ENCODE measurements at regions of chr7 and their contacts with region 1.

Region 1: GRCh38 chr7:44606450-44607254 is at the start of gene OGDH:
- DNase-seq: peak; percentile 100
- ATAC-seq: peak; percentile 98
- H3K4me3 Mint-ChIP-seq: peak within 1 kb of the TSS; percentile 92
- H3K27ac Mint-ChIP-seq: peak within 1 kb of the TSS; percentile 97
- H3K4me1 Mint-ChIP-seq: peaks cover 33% of the 10 kb centered on the region
- H3K27me3 Mint-ChIP-seq: no peaks in the 10 kb centered on the region
- total RNA-seq, gene OGDH: 80.3 to 90.1 TPM

Region 2: DNA sequence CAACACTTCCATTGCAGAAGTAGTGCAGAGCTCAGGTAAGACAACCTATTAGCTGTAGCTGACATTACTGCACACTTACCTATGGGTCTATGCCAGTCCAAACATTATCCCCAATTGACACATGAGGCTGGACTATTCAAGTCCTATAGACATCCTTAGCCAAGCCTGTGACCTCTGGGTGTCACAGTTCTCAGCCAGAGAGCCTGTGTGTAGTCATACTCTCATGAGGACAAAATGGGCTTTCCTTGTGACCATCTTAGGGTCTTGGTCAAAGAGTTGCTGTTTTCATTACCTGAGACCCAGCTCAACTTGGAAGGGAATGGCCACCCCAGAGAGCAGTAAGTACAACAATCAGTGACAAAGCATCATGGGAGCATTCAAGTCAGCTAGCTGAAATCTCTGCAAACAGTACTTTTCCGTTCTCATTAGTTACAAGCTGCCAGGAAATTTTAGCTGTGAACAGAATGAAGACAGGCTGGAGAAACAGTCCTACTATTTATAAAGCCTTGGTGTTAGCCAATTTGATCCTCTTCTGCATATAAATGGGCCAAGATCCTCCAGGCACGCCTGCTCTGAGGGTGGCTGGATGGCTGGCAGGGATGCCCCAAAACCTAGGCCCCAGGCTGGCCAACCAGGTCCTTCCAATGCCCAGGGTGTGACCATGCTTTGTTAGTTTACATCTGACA is 160.5 kb before region 1 on chr7:
- CTCF ChIA-PET with region 1: no interaction called
- POLR2A ChIA-PET with region 1: no interaction called
- intact Hi-C with region 1: no loop called
- DNase-seq: no peak
- ATAC-seq: no peak
- H3K4me3 Mint-ChIP-seq: no peak overlapping the region
- H3K27ac Mint-ChIP-seq: no peak overlapping the region
- H3K4me1 Mint-ChIP-seq: peaks cover 41% of the 10 kb centered on the region
- H3K27me3 Mint-ChIP-seq: no peaks in the 10 kb centered on the region

Region 3: DNA sequence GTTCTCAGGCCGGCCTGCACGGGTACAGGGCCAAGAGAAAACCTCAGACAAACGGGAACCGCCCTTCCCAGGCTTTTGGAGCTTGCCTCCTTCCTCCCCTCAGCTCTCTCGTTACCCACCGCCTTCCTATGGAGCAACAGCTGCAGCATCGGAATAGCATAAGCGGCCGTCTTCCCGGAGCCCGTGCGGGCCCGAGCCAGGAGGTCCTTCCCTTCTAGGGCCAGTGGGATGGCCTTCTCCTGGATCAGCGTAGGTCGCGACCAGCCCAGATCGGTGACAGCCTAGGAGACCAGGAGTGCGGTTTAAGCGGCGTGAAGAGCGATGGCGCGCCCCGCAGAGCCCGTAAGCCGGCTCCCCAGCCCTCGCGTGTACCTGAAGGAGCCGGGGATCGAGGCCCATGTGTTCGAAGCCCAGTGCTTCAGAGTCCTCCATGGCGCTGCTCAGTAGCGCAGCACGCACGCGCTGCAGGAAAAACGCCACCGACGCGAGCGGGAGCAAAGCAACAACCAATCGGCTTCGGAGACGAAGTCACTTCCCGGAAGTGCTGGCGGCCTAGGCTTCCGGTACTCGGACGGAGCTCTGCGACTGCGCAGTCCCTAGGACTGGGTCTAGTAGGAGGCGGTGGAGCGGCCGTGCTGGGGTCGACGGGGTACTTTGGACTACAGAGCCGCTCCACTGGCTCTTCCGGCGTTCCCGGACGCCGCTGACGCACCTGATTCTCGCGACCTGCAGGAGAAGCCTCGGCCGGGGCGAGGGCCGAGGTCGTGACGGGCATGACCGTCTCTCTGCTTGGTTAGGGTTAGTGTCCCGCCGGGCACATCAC is 33.0 kb before region 1 on chr7 and contains the start of gene DDX56:
- CTCF ChIA-PET with region 1: interaction called, 3 read pairs
- POLR2A ChIA-PET with region 1: interaction called, 12 read pairs
- intact Hi-C with region 1: loop called in 1 of 2 experiments (anchors 2 kb)
- DNase-seq: peak; percentile 97
- ATAC-seq: peak; percentile 98
- H3K4me3 Mint-ChIP-seq: peak within 1 kb of the TSS; percentile 90
- H3K27ac Mint-ChIP-seq: peak within 1 kb of the TSS; percentile 94
- H3K4me1 Mint-ChIP-seq: peaks cover 41% of the 10 kb centered on the region
- H3K27me3 Mint-ChIP-seq: no peaks in the 10 kb centered on the region
- total RNA-seq, gene DDX56: 98.5 to 104 TPM

Region 4: GRCh38 chr7:44581879-44582603 is 24.6 kb before region 1 on chr7 and contains the start of gene TMED4:
- CTCF ChIA-PET with region 1: interaction called, 6 read pairs
- POLR2A ChIA-PET with region 1: interaction called, 6 read pairs
- intact Hi-C with region 1: loop called (anchors 1 kb)
- DNase-seq: peak; percentile 100
- ATAC-seq: peak; percentile 95
- H3K4me3 Mint-ChIP-seq: peak within 1 kb of the TSS; percentile 85
- H3K27ac Mint-ChIP-seq: peak within 1 kb of the TSS; percentile 92
- H3K4me1 Mint-ChIP-seq: peaks cover 33% of the 10 kb centered on the region
- H3K27me3 Mint-ChIP-seq: no peaks in the 10 kb centered on the region
- total RNA-seq, gene TMED4: 71.6 to 73.0 TPM

Region 5: DNA sequence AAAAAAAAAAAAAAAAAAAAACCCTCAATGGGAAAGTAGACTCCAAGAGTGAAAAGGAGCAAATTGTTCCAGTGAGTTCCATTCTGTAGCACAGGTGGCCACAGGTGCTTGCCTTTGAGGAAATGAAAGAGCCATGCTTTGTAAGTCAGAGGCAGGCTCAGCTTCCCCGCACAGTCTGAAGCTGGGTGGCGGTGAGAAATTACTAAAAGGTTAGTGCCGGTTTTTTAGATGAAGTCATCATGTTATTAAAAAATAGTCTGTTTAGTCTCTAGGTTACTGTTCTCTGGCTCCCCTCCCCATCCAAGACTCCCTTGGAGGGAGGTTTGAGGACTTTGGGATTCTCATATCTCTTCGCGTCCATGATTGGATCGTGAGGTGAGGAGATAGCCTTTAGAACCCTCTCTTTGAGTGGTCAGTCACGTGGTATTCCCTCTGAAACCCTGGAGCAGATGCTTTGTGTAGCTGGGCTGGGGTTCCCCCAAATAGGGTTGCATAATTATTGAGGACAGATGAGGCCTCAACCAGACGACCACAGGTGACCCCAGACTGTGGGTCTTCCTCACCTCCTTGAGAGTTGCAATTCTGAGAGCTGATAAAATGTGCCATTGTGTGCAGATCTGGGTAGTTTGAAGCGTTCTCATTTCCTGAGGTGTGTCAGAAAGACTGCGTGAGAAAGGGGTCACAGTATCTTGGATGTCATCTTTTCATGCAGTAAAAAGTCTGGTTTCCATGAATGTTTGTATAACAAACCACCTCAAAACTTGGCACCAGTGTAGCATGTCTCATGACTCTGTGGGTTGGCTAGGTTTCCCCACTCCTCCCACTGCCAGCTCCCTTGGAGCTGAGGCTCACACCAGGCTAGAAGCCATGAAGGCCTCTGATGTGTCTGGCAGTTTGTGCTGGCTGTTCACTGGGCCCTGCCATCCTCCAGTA is 26.9 kb after region 1 on chr7:
- CTCF ChIA-PET with region 1: interaction called, 7 read pairs
- POLR2A ChIA-PET with region 1: interaction called, 23 read pairs
- intact Hi-C with region 1: loop called (anchors 1 kb)
- DNase-seq: peak; percentile 72
- ATAC-seq: peak; percentile 57
- H3K4me3 Mint-ChIP-seq: peak overlapping the region; percentile 51
- H3K27ac Mint-ChIP-seq: peak overlapping the region; percentile 93
- H3K4me1 Mint-ChIP-seq: peaks cover 93% of the 10 kb centered on the region
- H3K27me3 Mint-ChIP-seq: no peaks in the 10 kb centered on the region

Region 6: GRCh38 chr7:44735403-44736165 is 128.9 kb after region 1 on chr7:
- CTCF ChIA-PET with region 1: interaction called, 3 read pairs
- POLR2A ChIA-PET with region 1: interaction called, 11 read pairs
- intact Hi-C with region 1: no loop called
- DNase-seq: peak; percentile 69
- ATAC-seq: peak; percentile 93
- H3K4me3 Mint-ChIP-seq: peak overlapping the region; percentile 6
- H3K27ac Mint-ChIP-seq: peak overlapping the region; percentile 81
- H3K4me1 Mint-ChIP-seq: peaks cover 24% of the 10 kb centered on the region
- H3K27me3 Mint-ChIP-seq: no peaks in the 10 kb centered on the region

Region 7: DNA sequence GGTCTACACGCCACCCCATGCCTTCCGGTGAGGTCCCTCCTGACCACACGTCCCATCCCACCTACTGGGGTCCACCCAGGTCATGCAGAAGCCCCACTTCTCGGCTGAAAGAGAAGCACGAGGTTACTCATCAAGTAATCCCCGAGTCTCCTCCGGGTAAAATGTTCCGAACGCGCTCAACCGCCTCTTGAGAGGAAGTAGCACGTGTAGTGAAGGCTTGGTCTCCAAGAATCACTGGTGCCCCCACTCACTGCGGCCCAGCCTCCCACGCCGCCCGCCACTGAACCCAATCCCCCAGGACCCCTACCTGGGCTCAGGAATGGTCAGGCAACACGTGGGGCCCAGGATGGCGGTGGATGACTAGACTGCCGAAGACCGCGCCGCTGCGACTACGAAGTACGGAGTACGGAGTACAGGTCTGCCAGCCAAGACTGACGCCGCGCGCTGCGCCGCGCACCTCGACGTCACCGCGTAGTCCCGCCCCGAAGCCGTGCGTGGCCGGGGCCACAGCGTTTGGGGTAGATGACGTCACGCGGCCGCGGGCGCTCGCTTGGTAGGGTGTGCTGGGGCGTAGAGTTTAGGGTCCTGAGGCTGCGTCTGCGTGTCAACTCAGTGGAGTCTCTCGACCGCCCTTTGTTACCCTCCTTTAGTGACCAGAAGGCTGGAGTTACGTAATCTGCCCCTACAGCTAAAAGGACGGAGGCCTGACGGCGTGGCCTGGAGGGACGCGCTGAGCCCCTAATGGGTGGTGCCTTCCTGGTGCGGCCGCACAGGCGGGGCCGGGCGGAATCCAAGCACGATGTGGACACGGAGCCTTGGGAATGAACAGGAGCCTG is 379.8 kb after region 1 on chr7:
- CTCF ChIA-PET with region 1: no interaction called
- POLR2A ChIA-PET with region 1: no interaction called
- intact Hi-C with region 1: loop called in 1 of 2 experiments (anchors 1 kb)
- DNase-seq: peak; percentile 99
- ATAC-seq: peak; percentile 90
- H3K4me3 Mint-ChIP-seq: peak overlapping the region; percentile 99
- H3K27ac Mint-ChIP-seq: peak overlapping the region; percentile 99
- H3K4me1 Mint-ChIP-seq: peaks cover 52% of the 10 kb centered on the region
- H3K27me3 Mint-ChIP-seq: no peaks in the 10 kb centered on the region